Natural killer cell (primary cell): ENCODE measurements at regions of chr14 and their contacts with region 1.

Region 1: DNA sequence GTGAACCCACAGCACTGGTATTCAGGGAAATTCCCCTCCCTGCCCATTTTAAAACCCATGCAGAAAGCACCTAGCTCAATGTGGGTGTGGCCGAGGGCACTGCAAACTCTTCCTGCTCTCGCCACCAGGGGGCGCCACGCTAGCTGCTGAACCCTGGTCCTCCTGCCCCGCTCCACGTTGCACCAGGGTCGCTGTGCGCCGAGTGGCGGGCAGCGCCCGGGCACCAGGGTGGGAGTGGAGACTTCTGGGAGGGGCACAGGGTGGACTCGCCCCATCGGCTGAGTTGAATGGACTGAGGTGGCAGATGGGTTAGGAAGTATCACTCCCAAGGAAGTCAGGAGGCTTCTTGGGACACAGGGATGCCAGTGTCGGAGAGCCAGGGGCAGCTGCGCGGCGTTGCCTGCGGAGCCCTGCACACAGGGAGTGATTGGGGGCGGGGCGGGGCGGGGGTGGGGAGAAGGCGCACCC is 48.1 kb upstream of the BCL11B start:
- DNase-seq: peak; percentile 87 to 88
- ATAC-seq: peak; percentile 74 to 83 (median 81)
- H3K4me3 ChIP-seq: peak overlapping the region; percentile 15
- H3K4me3 Mint-ChIP-seq: peak overlapping the region; percentile 85
- H3K27ac ChIP-seq: peak overlapping the region; percentile 85
- H3K27ac Mint-ChIP-seq: peak overlapping the region; percentile 22 to 63
- H3K4me1 ChIP-seq: peaks cover 65% of the 10 kb centered on the region
- H3K4me1 Mint-ChIP-seq: peaks cover 41 to 66% of the 10 kb centered on the region in 2 donors
- H3K27me3 ChIP-seq: no peaks in the 10 kb centered on the region
- H3K27me3 Mint-ChIP-seq: no peaks in the 10 kb centered on the region
- CTCF ChIP-seq: peak; percentile 85

Region 2: GRCh38 chr14:99271951-99272631 is 48.0 kb before region 1 on chr14 and contains the start of gene BCL11B:
- intact Hi-C with region 1: loop called (anchors 5 kb)
- DNase-seq: peak; percentile 73 to 96
- ATAC-seq: peak; percentile 71 to 89 (median 78)
- H3K4me3 ChIP-seq: peak within 1 kb of the TSS; percentile 61
- H3K4me3 Mint-ChIP-seq: peak within 1 kb of the TSS; percentile 99
- H3K27ac ChIP-seq: peak within 1 kb of the TSS; percentile 60
- H3K27ac Mint-ChIP-seq: peak within 1 kb of the TSS; percentile 90 to 91
- H3K4me1 ChIP-seq: peaks cover 43% of the 10 kb centered on the region
- H3K4me1 Mint-ChIP-seq: peaks cover 65 to 71% of the 10 kb centered on the region in 2 donors
- H3K27me3 ChIP-seq: no peaks in the 10 kb centered on the region
- H3K27me3 Mint-ChIP-seq: no peaks in the 10 kb centered on the region
- CTCF ChIP-seq: peak; percentile 65
- total RNA-seq, gene BCL11B: 43.5 to 61.5 (median 56.2) TPM

Region 3: GRCh38 chr14:99287269-99287942 is 32.7 kb before region 1 on chr14:
- intact Hi-C with region 1: loop called (anchors 2 kb)
- DNase-seq: peak; percentile 62 to 67
- ATAC-seq: peak; percentile 84 to 87 (median 87)
- H3K4me3 ChIP-seq: peak overlapping the region; percentile 48
- H3K4me3 Mint-ChIP-seq: peak overlapping the region; percentile 92
- H3K27ac ChIP-seq: peak overlapping the region; percentile 81
- H3K27ac Mint-ChIP-seq: peak overlapping the region; percentile 95 to 97
- H3K4me1 ChIP-seq: peaks cover 50% of the 10 kb centered on the region
- H3K4me1 Mint-ChIP-seq: peaks cover 66 to 70% of the 10 kb centered on the region in 2 donors
- H3K27me3 ChIP-seq: no peaks in the 10 kb centered on the region
- H3K27me3 Mint-ChIP-seq: peaks cover 0 to 3% of the 10 kb centered on the region in 2 donors
- CTCF ChIP-seq: no peak

Region 4: DNA sequence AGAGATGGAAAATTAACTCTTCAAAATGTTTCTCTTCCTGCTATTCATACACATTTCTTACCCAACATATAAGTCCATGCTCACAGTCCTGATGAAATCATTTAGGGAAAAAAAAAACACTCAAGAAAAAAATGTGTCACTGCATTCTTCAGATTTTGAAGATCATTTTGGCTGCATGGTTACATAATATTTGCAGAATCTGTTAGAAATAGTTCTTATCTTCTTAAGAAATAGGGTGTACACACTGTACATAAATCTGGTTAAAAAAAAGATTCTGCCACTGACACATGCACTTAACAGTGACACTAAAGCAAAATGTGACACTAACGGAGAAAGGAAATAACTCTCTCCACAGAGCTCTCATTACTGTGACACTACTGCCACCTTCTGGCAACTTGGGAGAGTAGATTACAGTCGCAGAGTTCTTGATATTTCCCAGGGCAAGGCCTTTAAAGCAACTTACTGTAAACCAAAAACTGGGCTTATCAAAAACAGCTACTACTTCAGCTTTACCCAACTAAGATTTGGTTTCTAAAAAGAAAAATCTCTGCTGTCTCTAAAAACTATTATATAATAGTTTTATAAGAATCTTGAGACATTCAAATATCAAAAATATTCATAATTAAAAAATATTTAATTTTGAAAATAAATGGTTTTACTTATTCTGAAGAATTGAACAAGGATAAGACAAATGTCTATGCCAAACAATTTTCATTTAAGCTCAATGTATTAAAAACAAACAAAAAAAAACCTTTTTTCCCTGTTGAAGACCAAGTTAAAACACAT is 95.5 kb after region 1 on chr14:
- intact Hi-C with region 1: loop called (anchors 1 kb)
- DNase-seq: peak; percentile 46 to 93
- ATAC-seq: peak; percentile 96 to 100 (median 99)
- H3K4me3 ChIP-seq: no peak overlapping the region
- H3K4me3 Mint-ChIP-seq: no peak overlapping the region
- H3K27ac ChIP-seq: no peak overlapping the region
- H3K27ac Mint-ChIP-seq: peak overlapping the region; percentile 66 to 67
- H3K4me1 ChIP-seq: no peaks in the 10 kb centered on the region
- H3K4me1 Mint-ChIP-seq: peaks cover 20 to 23% of the 10 kb centered on the region in 2 donors
- H3K27me3 ChIP-seq: no peaks in the 10 kb centered on the region
- H3K27me3 Mint-ChIP-seq: no peaks in the 10 kb centered on the region
- CTCF ChIP-seq: peak; percentile 97

Region 5: GRCh38 chr14:99480917-99481744 is 161.0 kb after region 1 on chr14 and contains the start of gene CCNK:
- intact Hi-C with region 1: loop called (anchors 1 kb)
- DNase-seq: peak; percentile 100
- ATAC-seq: peak; percentile 84 to 95 (median 85)
- H3K4me3 ChIP-seq: peak within 1 kb of the TSS; percentile 94
- H3K4me3 Mint-ChIP-seq: peak within 1 kb of the TSS; percentile 97
- H3K27ac ChIP-seq: peak within 1 kb of the TSS; percentile 94
- H3K27ac Mint-ChIP-seq: peak within 1 kb of the TSS; percentile 96 to 97
- H3K4me1 ChIP-seq: peaks cover 21% of the 10 kb centered on the region
- H3K4me1 Mint-ChIP-seq: peaks cover 72 to 82% of the 10 kb centered on the region in 2 donors
- H3K27me3 ChIP-seq: no peaks in the 10 kb centered on the region
- H3K27me3 Mint-ChIP-seq: no peaks in the 10 kb centered on the region
- CTCF ChIP-seq: no peak
- total RNA-seq, gene CCNK: 155 to 168 (median 165) TPM

Region 6: DNA sequence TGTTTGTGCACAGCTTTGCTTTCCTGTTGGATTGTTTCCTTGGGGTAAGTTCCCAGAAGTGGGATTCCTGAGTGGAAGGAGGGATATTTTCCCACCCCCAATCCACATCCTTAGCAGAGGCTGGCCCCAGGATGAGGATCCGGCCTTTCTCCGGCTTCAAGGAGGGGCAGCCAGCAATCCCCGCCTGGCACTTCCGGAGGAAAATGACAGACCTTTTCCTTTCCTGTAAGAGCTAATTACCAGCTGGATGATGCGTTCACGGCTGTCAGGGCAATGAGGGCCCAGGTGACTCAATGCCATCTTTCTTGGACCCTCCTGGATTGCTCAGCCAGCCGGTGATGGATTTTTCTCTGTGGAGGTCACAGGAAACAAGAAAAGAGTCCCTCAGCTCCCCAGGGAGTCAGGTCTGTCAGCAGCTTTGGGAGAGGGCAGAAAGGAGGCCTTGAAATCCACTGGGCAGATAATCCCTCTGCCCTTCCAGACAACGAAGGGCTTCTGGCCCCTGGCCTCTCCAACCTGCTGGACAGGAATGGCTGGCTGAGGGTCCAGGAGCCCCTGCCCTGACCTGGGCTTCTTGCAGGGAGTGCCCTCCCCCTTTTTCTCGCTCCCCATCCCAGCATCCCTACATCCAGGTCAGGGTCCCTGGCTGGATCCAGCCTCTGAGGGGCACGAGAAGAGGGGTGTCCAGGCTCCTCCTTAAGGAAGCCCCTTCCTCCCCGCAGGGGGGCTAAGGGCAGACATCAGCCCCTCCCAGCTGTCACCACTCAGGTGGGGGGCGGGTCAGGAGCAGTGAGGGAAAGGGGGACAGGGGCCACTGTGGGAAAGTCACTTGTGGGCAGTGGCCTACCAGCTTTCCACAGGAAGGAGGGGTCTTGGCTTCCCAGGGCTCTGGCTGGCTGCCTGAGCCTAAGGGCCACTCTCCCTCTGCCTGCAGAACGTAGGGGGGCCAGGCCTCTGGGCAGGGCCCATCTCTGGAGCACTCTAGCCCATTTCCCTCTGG is 300.0 kb after region 1 on chr14:
- intact Hi-C with region 1: no loop called
- DNase-seq: no peak
- ATAC-seq: no peak
- H3K4me3 ChIP-seq: no peak overlapping the region
- H3K4me3 Mint-ChIP-seq: no peak overlapping the region
- H3K27ac ChIP-seq: no peak overlapping the region
- H3K27ac Mint-ChIP-seq: no peak overlapping the region
- H3K4me1 ChIP-seq: peaks cover 5% of the 10 kb centered on the region
- H3K4me1 Mint-ChIP-seq: no peaks in the 10 kb centered on the region
- H3K27me3 ChIP-seq: peaks cover 9% of the 10 kb centered on the region
- H3K27me3 Mint-ChIP-seq: peaks cover 11 to 12% of the 10 kb centered on the region in 2 donors
- CTCF ChIP-seq: no peak